Ascending aorta (tissue), 2 donors: ENCODE measurements at regions of chr15 and their contacts with region 1.

Region 1: GRCh38 chr15:60444289-60444912 is 34.5 kb downstream of the ICE2 start:
- DNase-seq: no peak
- H3K4me3 ChIP-seq: no peak overlapping the region
- H3K27ac ChIP-seq: no peak overlapping the region
- H3K4me1 ChIP-seq: no peaks in the 10 kb centered on the region
- H3K27me3 ChIP-seq: no peaks in the 10 kb centered on the region
- CTCF ChIP-seq: peak; percentile 26 to 79 (median 60)

Region 2: DNA sequence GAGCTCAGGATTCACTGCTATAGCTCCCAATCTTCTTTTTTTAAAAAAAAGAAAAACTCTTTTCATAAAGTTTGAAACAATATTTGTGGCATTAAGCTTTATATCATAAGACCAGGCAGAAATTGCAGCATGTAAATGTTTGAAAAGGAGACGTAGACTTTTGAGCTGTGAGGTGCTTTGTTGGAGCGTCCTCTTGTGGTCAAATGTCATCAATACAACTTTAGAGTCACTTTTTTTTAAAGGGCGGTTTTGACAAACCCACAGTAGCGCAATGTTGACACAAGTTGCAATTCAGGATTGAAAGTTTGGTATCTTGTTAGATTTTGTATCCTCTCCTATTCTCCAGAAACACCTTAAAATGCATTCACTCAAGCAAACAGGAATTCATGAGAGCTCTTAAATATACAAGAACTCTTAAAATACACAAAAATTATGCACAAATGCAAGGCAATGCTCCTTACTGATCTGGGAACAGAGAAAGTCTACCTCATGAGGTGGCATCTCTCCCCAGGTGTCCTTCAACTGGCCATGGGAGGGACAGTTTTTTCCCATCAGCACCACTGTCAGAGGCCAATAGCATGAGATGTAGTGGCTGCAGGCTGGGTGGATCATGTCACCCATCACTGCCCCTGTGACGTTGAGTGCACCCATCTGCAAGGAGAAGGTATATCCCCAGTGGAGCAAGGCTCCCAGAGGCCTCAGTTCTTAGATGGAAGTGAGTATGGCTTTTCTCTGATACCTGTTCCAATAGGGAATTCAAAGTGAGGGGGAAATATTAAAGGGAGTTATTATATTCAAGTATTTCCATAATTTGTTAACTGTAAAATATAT is 117.4 kb before region 1 on chr15:
- intact Hi-C with region 1: loop called (anchors 1 kb)
- DNase-seq: no peak
- H3K4me3 ChIP-seq: no peak overlapping the region
- H3K27ac ChIP-seq: no peak overlapping the region
- H3K4me1 ChIP-seq: no peaks in the 10 kb centered on the region
- H3K27me3 ChIP-seq: no peaks in the 10 kb centered on the region
- CTCF ChIP-seq: peak; percentile 43 to 65 (median 64)

Region 3: GRCh38 chr15:60390871-60391501 is 53.4 kb before region 1 on chr15:
- intact Hi-C with region 1: loop called (anchors 2 kb)
- DNase-seq: peak; percentile 23 to 90
- H3K4me3 ChIP-seq: peak overlapping the region; percentile 32 to 42
- H3K27ac ChIP-seq: peak overlapping the region; percentile 98 to 99
- H3K4me1 ChIP-seq: peaks cover 13 to 88% of the 10 kb centered on the region in 2 donors
- H3K27me3 ChIP-seq: no peaks in the 10 kb centered on the region
- CTCF ChIP-seq: peak in 1 of 3 experiments; percentile 35